ENCODE measurements at regions of chr10 and their contacts with region 1.

Region 1: DNA sequence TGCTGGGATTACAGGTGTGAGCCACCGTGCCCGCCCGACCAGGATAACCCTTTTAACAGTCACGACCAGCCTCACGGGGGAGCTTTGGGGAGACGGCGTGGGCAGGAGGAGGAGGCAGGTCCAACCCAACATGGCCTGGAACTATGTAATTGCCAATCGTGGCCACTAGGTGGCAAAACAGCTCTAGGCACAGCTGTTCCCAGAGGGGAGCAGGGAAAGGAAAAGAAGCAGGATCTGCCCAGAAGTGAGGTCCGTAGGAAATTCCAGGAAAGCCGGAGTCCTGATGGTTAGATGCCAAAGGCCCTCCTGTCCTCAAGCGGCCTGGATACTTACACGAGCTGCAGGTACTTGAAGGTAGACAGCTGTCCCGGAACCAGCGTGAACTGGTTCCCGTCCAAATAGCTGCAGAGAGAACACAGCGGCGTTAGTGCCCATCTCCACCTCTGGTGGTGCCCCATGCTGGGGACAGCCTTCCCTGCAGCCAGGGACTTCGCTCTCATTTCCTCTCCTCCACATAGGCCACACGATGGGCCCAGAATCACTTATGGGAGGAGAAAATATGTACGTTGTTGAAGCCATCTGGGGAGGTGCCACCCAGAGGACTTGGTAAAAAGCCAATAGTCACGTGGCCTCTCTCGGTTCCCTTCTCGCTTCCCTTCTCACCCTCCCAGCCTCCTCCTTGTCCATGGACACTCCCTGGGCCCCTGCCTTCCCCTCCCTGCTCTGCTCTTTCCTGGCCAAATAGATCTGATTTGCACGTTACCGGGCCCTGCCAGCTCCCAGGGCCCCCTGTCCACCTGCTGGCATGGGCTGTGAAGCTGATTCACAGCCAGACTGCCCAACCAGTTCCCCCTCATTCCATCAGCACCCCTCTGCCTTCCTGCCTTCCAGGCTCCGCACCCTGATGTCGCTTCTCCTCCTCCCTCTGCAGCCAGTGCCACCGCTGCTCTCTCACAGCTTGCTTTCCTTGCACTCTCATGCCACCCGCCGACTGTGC is 148.1 kb downstream of the SLIT1 start:
- DNase-seq: peak; percentile 83
- ATAC-seq: peak; percentile 97
- H3K4me3 ChIP-seq: peak overlapping the region; percentile 44 to 58 (median 50)
- H3K4me3 Mint-ChIP-seq: peak overlapping the region; percentile 86
- H3K27ac ChIP-seq: no peak overlapping the region
- H3K27ac Mint-ChIP-seq: peak overlapping the region; percentile 62
- H3K4me1 ChIP-seq: peaks cover 7 to 10% of the 10 kb centered on the region in 2 donors
- H3K4me1 Mint-ChIP-seq: peaks cover 18% of the 10 kb centered on the region
- H3K27me3 ChIP-seq: peaks cover 0 to 3% (median 0%) of the 10 kb centered on the region in 4 experiments
- H3K27me3 Mint-ChIP-seq: peaks cover 16% of the 10 kb centered on the region
- CTCF ChIP-seq: peak; percentile 92

Region 2: GRCh38 chr10:96910488-96911395 is 126.9 kb before region 1 on chr10:
- CTCF ChIA-PET with region 1: interaction called, 11 read pairs
- POLR2A ChIA-PET with region 1: no interaction called
- intact Hi-C with region 1: no loop called
- DNase-seq: peak; percentile 63
- ATAC-seq: peak; percentile 53
- H3K4me3 ChIP-seq: no peak overlapping the region
- H3K4me3 Mint-ChIP-seq: no peak overlapping the region
- H3K27ac ChIP-seq: peak overlapping the region in 1 of 2 donors; percentile 33
- H3K27ac Mint-ChIP-seq: no peak overlapping the region
- H3K4me1 ChIP-seq: no peaks in the 10 kb centered on the region
- H3K4me1 Mint-ChIP-seq: peaks cover 13% of the 10 kb centered on the region
- H3K27me3 ChIP-seq: no peaks in the 10 kb centered on the region
- H3K27me3 Mint-ChIP-seq: no peaks in the 10 kb centered on the region
- CTCF ChIP-seq: peak; percentile 91

Region 3: DNA sequence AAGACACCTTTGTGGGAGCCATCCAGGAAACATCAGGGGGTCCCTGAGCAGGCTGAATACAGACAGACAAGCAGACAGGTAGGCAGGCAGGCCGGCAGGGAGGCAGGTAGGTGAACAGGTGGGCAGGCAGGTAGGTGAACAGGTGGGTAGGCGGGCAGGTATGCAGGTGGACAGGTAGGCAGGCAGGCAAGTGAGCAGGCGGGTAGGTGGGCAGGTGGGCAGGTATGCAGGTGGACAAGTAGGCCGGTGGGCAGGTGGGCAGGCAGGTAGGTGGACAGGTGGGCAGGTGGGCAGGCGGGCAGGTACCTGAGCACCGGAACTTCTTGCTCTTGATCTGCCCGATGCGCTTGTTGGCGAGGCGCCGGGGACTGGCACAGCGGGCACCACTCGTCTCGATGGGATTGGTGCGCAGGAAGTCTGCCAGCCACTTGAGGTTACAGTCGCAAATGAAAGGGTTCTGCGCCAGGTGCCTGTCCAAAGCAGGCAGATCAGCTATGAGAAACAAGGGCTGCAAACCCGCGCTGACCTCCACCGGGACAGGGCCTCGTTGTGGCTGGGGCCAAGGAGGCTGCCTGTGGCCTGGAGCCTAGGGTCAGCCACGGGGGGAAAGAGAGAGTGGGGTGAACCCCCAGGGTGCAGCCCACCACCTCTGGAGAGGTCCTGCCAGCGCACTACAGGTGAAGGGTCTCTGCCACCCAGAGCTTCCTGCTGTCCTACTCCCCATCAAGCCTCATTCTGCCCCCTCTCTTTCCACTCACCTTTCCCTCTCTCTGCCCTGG is 11.2 kb after region 1 on chr10:
- CTCF ChIA-PET with region 1: interaction called, 11 read pairs
- POLR2A ChIA-PET with region 1: no interaction called
- intact Hi-C with region 1: no loop called
- DNase-seq: no peak
- ATAC-seq: no peak
- H3K4me3 ChIP-seq: no peak overlapping the region
- H3K4me3 Mint-ChIP-seq: no peak overlapping the region
- H3K27ac ChIP-seq: no peak overlapping the region
- H3K27ac Mint-ChIP-seq: no peak overlapping the region
- H3K4me1 ChIP-seq: peaks cover 0 to 3% of the 10 kb centered on the region in 2 donors
- H3K4me1 Mint-ChIP-seq: peaks cover 6% of the 10 kb centered on the region
- H3K27me3 ChIP-seq: peaks cover 0 to 5% (median 0%) of the 10 kb centered on the region in 4 experiments
- H3K27me3 Mint-ChIP-seq: peaks cover 16% of the 10 kb centered on the region
- CTCF ChIP-seq: no peak

Region 4: DNA sequence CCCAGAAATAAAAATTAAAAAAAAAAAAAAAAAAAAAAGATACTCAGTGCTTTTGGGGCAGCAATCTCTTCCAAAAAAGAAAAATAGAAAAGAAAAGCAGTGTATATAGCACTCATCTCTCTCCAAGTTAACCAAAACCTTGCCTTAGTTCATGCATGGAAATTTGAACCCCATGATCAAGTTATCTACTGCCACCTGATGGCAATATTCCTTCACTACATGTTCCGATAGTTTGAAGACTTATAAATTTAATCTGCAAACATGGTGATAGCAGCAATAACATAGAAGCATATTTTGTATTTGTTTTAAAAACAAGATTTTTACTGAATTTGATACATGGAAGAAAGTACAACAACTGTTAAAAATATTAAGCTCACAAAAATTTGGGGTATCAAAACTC is 196.7 kb after region 1 on chr10:
- CTCF ChIA-PET with region 1: interaction called, 7 read pairs
- POLR2A ChIA-PET with region 1: no interaction called
- intact Hi-C with region 1: loop called (anchors 1 kb)
- DNase-seq: peak; percentile 29
- ATAC-seq: no peak
- H3K4me3 ChIP-seq: no peak overlapping the region
- H3K4me3 Mint-ChIP-seq: no peak overlapping the region
- H3K27ac ChIP-seq: no peak overlapping the region
- H3K27ac Mint-ChIP-seq: no peak overlapping the region
- H3K4me1 ChIP-seq: peaks cover 0 to 4% of the 10 kb centered on the region in 2 donors
- H3K4me1 Mint-ChIP-seq: peaks cover 5% of the 10 kb centered on the region
- H3K27me3 ChIP-seq: no peaks in the 10 kb centered on the region
- H3K27me3 Mint-ChIP-seq: no peaks in the 10 kb centered on the region
- CTCF ChIP-seq: peak; percentile 67